ENCODE measurements at regions of chr2 and their contacts with region 1.

Region 1: DNA sequence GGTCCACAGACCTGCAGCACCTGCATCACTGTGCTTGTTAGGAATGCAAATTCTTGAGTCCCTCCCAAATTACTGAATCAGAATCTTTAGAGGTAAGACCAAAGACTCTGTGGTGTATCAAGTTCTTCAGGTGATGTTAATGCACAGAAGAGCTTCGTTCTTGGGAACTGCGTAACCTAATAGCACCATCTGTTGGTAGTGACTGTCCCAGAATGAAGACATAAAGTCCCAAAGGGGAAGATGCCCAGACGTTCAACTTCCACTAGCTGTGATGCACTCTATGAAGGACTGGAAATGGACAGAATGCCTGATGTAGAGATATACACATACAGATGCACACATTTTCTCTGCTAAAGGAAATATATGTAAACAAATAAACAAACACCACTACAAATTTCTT is 576.0 kb downstream of the LRP1B start:
- DNase-seq: peak; percentile 40
- H3K4me3 Mint-ChIP-seq: no peak overlapping the region
- H3K27ac Mint-ChIP-seq: no peak overlapping the region
- H3K4me1 Mint-ChIP-seq: peaks cover 38% of the 10 kb centered on the region
- H3K27me3 Mint-ChIP-seq: no peaks in the 10 kb centered on the region
- CTCF ChIP-seq: no peak

Region 2: DNA sequence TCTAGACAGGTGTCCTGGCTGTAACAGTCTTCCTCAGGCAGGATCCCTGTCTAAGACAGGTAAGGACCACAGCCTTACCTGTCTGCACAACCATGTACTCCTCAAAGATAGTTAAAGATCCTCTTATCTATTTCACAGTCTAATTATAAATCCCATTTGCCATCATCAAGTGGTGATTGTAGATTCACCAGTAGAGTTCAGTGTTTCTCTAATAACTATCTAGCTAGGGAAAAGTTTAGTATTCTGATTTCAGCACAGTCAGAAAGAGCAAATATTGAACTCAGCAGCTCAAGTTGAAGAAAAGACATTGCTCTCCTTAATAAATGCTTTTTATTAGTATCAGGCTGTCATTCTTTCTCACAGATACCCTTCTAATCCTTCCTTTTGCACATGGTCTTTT is 1469.1 kb before region 1 on chr2:
- CTCF ChIA-PET with region 1: no interaction called
- intact Hi-C with region 1: loop called (anchors 10 kb)
- DNase-seq: no peak
- H3K4me3 Mint-ChIP-seq: no peak overlapping the region
- H3K27ac Mint-ChIP-seq: no peak overlapping the region
- H3K4me1 Mint-ChIP-seq: no peaks in the 10 kb centered on the region
- H3K27me3 Mint-ChIP-seq: no peaks in the 10 kb centered on the region
- CTCF ChIP-seq: no peak

Region 3: DNA sequence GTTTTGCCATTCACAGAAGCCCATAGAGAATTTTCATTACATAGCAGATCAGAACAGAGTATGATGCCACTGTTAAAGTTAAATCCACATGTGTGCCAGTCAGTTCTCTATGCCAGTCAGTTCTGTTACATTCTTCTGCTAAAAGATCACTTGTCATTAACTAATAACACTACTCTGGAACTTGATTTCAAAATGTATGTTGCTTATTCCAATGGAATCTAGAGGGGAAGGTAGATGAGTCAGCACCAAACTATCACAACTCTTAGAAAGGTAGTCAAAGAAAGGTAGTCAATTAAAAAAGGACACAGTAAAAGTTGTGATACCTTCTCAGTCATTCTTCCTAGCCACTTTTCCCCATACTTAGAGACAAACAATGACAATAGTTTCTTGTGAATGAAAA is 638.4 kb before region 1 on chr2:
- CTCF ChIA-PET with region 1: no interaction called
- intact Hi-C with region 1: loop called (anchors 10 kb)
- DNase-seq: no peak
- H3K4me3 Mint-ChIP-seq: no peak overlapping the region
- H3K27ac Mint-ChIP-seq: no peak overlapping the region
- H3K4me1 Mint-ChIP-seq: peaks cover 11% of the 10 kb centered on the region
- H3K27me3 Mint-ChIP-seq: no peaks in the 10 kb centered on the region
- CTCF ChIP-seq: no peak

Region 4: DNA sequence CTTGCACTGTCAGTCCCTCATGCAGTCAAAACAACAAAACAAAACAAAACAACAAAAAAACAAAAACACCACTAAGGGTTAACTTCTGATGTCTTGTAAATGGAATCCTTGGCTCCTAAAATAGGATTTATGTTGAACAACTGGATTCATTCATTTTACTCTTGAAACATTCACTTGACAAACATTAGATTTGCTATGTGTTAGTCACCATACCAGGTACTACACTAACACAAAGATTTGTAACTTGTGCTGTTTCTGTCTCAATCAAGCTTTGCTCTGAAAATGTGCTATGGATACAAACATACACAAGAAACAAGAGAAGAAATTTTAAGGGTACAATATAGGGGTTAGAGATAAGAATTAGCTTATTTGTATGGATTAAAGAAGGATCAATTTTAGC is 236.8 kb before region 1 on chr2:
- CTCF ChIA-PET with region 1: no interaction called
- intact Hi-C with region 1: loop called (anchors 2 kb)
- DNase-seq: no peak
- H3K4me3 Mint-ChIP-seq: no peak overlapping the region
- H3K27ac Mint-ChIP-seq: peak overlapping the region; percentile 95
- H3K4me1 Mint-ChIP-seq: peaks cover 27% of the 10 kb centered on the region
- H3K27me3 Mint-ChIP-seq: no peaks in the 10 kb centered on the region
- CTCF ChIP-seq: no peak

Region 5: GRCh38 chr2:141468761-141469160 is 86.0 kb before region 1 on chr2:
- CTCF ChIA-PET with region 1: no interaction called
- intact Hi-C with region 1: loop called (anchors 5 kb)
- DNase-seq: peak; percentile 62
- H3K4me3 Mint-ChIP-seq: no peak overlapping the region
- H3K27ac Mint-ChIP-seq: peak overlapping the region; percentile 42
- H3K4me1 Mint-ChIP-seq: peaks cover 8% of the 10 kb centered on the region
- H3K27me3 Mint-ChIP-seq: no peaks in the 10 kb centered on the region
- CTCF ChIP-seq: no peak

Region 6: DNA sequence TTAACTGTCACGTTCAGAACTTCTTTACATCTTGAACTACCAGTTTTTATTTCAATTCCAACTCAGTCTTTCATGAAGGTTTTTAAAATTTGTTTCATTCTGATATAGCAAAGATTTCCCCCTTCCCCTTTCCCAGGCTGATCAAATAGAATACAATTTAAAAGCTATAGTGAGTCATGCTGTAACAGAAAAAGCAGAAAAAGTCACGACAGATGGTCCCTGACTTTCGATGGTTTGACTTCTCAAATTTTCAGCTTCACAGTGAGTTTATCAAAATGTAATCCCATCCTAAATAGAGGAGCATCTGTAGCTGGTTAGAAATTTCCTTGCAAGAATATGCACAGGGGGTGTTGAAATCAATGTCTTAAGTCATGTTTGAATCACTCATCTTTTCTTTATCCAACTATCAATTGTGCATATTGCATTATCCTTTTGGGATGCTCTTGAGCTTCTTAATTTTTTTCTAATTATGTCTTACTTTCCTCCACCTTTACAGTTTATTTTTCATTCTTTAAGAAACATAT is 75.7 kb after region 1 on chr2:
- CTCF ChIA-PET with region 1: no interaction called
- intact Hi-C with region 1: no loop called
- DNase-seq: no peak
- H3K4me3 Mint-ChIP-seq: no peak overlapping the region
- H3K27ac Mint-ChIP-seq: no peak overlapping the region
- H3K4me1 Mint-ChIP-seq: no peaks in the 10 kb centered on the region
- H3K27me3 Mint-ChIP-seq: no peaks in the 10 kb centered on the region
- CTCF ChIP-seq: no peak

Region 7: DNA sequence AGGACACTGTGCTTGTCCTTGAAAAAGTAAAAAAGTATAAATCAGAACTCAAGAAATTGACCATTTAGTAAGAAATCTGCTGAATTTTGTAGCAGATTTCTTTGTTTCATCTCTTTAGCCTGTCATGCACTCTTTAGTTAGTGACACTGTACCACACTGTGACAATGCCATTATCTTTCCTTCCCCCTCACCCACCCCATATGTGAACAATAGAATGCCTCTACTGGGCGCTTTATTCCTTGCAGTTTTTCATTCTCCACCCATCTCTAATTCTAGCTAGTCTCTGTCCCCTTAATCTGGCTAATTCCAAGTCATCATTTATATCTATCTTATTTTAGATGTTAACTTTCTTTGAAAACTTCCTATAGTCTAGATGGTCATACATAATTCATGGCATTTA is 335.0 kb after region 1 on chr2:
- CTCF ChIA-PET with region 1: no interaction called
- intact Hi-C with region 1: no loop called
- DNase-seq: no peak
- H3K4me3 Mint-ChIP-seq: no peak overlapping the region
- H3K27ac Mint-ChIP-seq: no peak overlapping the region
- H3K4me1 Mint-ChIP-seq: no peaks in the 10 kb centered on the region
- H3K27me3 Mint-ChIP-seq: no peaks in the 10 kb centered on the region
- CTCF ChIP-seq: no peak

Region 8: DNA sequence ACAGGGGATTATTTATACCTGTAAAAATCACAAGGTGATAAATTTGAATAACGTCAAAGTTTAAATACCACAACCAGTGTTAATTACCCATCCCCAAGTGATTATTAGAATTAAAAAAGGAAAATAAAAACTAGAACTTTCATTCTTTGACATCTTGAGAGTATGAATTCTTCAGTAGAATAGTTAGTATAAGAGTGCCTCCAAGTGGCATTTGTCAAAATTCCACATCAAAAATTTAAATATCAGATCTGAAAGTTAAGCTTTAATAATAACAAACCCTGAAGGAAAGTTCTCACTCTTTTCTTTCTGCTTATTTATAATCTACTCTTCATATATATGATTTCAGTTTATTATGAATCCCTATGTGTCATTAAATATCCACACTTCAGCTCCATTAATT is 1048.9 kb after region 1 on chr2:
- CTCF ChIA-PET with region 1: no interaction called
- intact Hi-C with region 1: loop called (anchors 10 kb)
- DNase-seq: no peak
- H3K4me3 Mint-ChIP-seq: no peak overlapping the region
- H3K27ac Mint-ChIP-seq: no peak overlapping the region
- H3K4me1 Mint-ChIP-seq: peaks cover 24% of the 10 kb centered on the region
- H3K27me3 Mint-ChIP-seq: no peaks in the 10 kb centered on the region
- CTCF ChIP-seq: no peak